GM13976 (cell line): ENCODE measurements at regions of chr5 and their contacts with region 1.

Region 1: GRCh38 chr5:109479260-109479860 is 69.6 kb upstream of the PJA2 start:
- DNase-seq: peak; percentile 16
- CTCF ChIP-seq: peak; percentile 14

Region 2: GRCh38 chr5:108521841-108522506 is 957.4 kb before region 1 on chr5:
- in situ Hi-C with region 1: loop called (anchors 10 kb)
- DNase-seq: no peak
- CTCF ChIP-seq: peak; percentile 45

Region 3: DNA sequence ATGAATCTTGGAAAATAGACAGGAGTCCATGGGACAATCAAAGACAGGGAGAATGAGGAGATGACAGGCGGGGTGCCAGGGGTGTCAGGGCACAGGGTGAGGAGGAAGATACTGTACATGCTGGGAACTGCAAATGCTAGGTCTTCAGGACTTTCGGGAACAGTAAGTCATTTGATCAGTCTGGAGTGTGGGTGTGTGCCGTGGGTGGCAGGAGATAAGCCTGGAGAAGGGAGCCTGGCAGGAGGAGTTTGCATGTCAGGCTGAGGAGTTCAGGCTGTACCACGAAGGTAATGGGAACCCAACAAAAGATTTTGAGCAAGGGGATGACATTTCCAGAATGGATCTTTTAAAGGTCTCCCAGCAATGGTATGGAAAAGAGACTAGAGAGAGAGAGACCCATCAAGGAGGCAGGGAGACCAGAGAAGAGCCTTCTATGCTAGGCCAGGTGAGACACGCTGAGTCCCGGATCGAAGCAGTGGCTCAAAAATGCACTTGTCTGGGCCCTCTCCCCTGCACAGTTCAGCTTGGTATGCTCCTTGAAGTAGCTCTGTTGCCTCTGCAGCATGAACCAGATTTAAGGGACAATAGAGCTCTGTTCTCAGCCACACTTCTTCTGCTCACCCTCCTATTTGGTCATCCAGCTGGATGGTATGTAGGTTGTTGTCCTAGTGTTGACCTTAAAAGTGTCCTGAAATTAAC is 808.6 kb before region 1 on chr5:
- in situ Hi-C with region 1: loop called (anchors 10 kb)
- DNase-seq: no peak
- CTCF ChIP-seq: no peak

Region 4: GRCh38 chr5:109146591-109146990 is 332.8 kb before region 1 on chr5:
- in situ Hi-C with region 1: no loop called
- DNase-seq: no peak
- CTCF ChIP-seq: no peak

Region 5: GRCh38 chr5:110414360-110414759 is 935.0 kb after region 1 on chr5:
- in situ Hi-C with region 1: no loop called
- DNase-seq: peak; percentile 37
- CTCF ChIP-seq: peak; percentile 36